ENCODE measurements at regions of chr14 and their contacts with region 1.

Region 1: GRCh38 chr14:76352639-76353281 is 23.2 kb upstream of the ESRRB start:
- DNase-seq: peak; percentile 26 to 37
- ATAC-seq: peak; percentile 86 to 91
- H3K4me3 ChIP-seq: peak overlapping the region; percentile 49 to 55 (median 52)
- H3K27ac ChIP-seq: peak overlapping the region; percentile 69 to 74 (median 70)
- H3K4me1 ChIP-seq: peaks cover 19 to 26% of the 10 kb centered on the region in 2 donors
- H3K27me3 ChIP-seq: no peaks in the 10 kb centered on the region
- CTCF ChIP-seq: peak; percentile 76 to 94 (median 88)
- POLR2A ChIP-seq: no peak

Region 2: DNA sequence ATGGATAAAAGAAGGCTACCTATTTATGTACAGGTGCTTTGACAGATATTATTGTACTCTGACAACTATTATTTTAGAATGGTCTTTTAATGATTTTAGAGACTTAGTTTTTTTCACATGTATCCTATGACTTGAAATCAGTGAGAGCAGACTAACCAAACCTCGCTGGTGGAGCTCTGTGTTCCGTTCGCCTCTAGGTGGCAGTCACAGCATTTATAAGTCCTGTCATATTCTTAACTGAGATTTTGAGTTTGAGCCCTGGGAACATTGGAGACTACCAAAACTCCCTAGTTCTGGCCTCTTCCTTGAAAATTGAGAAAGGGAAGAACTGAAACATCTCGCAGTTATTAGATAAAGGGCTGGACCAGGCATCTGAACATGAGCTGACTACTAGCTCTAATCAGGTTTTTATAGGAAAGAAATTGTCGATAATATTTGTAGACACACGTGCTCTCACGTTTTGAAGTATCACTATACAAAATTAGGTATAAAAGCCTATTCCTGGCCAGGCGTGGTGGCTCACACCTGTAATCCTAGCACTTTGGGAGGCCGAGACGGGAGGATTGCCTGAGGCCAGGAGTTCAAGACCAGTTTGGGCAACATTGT is 643.5 kb before region 1 on chr14:
- in situ Hi-C with region 1: no loop called
- intact Hi-C with region 1: loop called (anchors 5 kb)
- DNase-seq: peak; percentile 54 to 70
- ATAC-seq: peak; percentile 48 to 63
- H3K4me3 ChIP-seq: no peak overlapping the region
- H3K27ac ChIP-seq: no peak overlapping the region
- H3K4me1 ChIP-seq: peaks cover 16 to 23% of the 10 kb centered on the region in 2 donors
- H3K27me3 ChIP-seq: no peaks in the 10 kb centered on the region
- CTCF ChIP-seq: peak; percentile 71 to 84 (median 74)
- POLR2A ChIP-seq: no peak

Region 3: DNA sequence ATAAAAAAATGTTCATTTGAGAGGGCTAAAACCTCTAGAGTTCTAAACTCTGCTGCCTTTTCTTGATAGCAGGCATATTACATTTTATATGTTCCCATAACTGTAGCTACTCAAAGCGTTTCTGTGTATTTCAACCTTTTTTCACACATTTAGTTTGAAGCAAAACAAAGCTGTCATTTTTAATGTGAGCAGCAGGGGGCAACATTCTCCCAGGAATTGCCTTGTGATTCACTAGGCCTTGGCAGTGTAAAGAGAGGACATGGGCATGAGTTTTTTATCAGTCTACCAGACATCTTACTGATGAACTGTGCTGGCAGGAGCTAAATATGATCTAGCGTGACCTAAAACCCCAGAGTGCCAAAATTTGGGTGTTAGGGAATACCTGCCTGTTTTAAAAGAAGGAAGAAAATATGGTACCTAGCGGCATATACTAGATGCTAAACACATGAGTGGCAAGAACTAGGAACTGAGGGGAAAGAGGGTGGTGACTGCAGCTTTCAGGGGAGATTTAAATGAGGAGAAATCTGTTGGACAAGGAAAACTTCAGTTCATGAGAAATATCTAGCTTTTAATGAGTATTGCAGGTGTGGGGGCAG is 301.9 kb before region 1 on chr14:
- in situ Hi-C with region 1: loop called (anchors 5 to 10 kb)
- intact Hi-C with region 1: loop called (anchors 1 kb)
- DNase-seq: peak; percentile 11 to 29
- ATAC-seq: peak; percentile 75 to 84
- H3K4me3 ChIP-seq: no peak overlapping the region
- H3K27ac ChIP-seq: no peak overlapping the region
- H3K4me1 ChIP-seq: no peaks in the 10 kb centered on the region
- H3K27me3 ChIP-seq: no peaks in the 10 kb centered on the region
- CTCF ChIP-seq: peak; percentile 75 to 86 (median 80)
- POLR2A ChIP-seq: no peak

Region 4: DNA sequence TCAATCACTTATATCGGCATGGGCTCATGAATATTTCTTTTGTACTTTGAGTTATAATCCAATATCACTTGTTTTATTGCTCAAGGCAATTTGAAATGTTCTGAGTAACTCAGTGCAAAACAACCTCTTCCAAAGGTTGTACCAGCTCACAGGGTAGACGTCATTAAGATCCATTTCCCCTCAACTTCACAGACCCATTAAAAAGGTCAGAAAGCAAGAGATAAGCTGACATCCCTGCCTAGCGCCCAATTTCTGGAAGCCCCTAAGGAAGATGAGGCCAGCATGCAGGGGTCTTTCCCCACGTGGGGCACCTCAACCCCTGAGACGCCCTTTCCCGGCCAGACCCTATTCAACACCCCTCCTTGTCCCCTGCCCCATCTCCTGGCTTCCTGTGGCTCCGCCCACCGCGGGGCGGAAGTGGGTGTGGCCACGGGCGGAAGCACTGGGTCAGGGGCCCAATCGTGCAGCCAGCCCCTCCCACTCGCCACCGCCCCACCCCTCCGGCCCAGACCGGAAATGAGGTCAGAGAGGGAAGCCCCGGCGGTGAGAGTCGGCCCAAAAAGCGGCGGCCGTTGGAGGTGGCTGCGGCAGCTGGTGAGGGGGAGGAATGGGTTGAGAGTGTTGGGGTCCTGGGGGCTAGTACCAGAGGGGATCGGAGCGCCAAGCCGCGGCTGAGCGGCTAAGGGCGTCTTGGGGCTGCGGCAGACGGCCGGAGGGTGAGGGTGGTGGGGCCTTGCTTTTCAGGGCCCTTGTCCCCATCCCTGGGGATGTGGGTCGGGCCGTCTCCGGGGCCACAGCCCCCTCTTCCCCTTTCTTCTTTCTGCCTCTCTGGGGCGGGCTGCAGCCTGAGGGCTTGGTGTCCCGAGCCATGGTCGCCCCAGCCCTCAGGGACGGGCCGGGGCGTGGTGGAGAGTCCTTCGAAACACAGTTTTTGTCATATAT is 201.1 kb before region 1 on chr14 and contains the start of gene GPATCH2L:
- in situ Hi-C with region 1: no loop called
- intact Hi-C with region 1: loop called (anchors 5 kb)
- DNase-seq: peak; percentile 89 to 95
- ATAC-seq: peak; percentile 90 to 95
- H3K4me3 ChIP-seq: peak within 1 kb of the TSS; percentile 81 to 99 (median 92)
- H3K27ac ChIP-seq: peak within 1 kb of the TSS; percentile 83 to 95 (median 94)
- H3K4me1 ChIP-seq: peaks cover 42 to 44% of the 10 kb centered on the region in 2 donors
- H3K27me3 ChIP-seq: no peaks in the 10 kb centered on the region
- CTCF ChIP-seq: no peak
- POLR2A ChIP-seq: peak; percentile 93
- total RNA-seq, gene GPATCH2L: 24.6 to 63.5 (median 41.9) TPM

Region 5: GRCh38 chr14:76212242-76212641 is 140.5 kb before region 1 on chr14:
- in situ Hi-C with region 1: no loop called
- intact Hi-C with region 1: no loop called
- DNase-seq: no peak
- ATAC-seq: no peak
- H3K4me3 ChIP-seq: no peak overlapping the region
- H3K27ac ChIP-seq: no peak overlapping the region
- H3K4me1 ChIP-seq: no peaks in the 10 kb centered on the region
- H3K27me3 ChIP-seq: no peaks in the 10 kb centered on the region
- CTCF ChIP-seq: no peak
- POLR2A ChIP-seq: no peak

Region 6: GRCh38 chr14:76267322-76268051 is 85.3 kb before region 1 on chr14:
- in situ Hi-C with region 1: no loop called
- intact Hi-C with region 1: loop called (anchors 5 kb)
- DNase-seq: peak; percentile 36 to 68
- ATAC-seq: peak; percentile 82 to 95
- H3K4me3 ChIP-seq: peak overlapping the region; percentile 52 to 66 (median 58)
- H3K27ac ChIP-seq: peak overlapping the region; percentile 3 to 77 (median 62)
- H3K4me1 ChIP-seq: peaks cover 0 to 4% of the 10 kb centered on the region in 2 donors
- H3K27me3 ChIP-seq: peaks cover 0 to 4% (median 0%) of the 10 kb centered on the region in 3 donors
- CTCF ChIP-seq: peak in 1 of 5 experiments; percentile 39
- POLR2A ChIP-seq: no peak

Region 7: GRCh38 chr14:76314521-76315034 is 38.2 kb before region 1 on chr14:
- in situ Hi-C with region 1: no loop called
- intact Hi-C with region 1: loop called (anchors 1 kb)
- DNase-seq: no peak
- ATAC-seq: no peak
- H3K4me3 ChIP-seq: no peak overlapping the region
- H3K27ac ChIP-seq: peak overlapping the region in 2 of 4 donors; percentile 15 to 36
- H3K4me1 ChIP-seq: peaks cover 18 to 24% of the 10 kb centered on the region in 2 donors
- H3K27me3 ChIP-seq: no peaks in the 10 kb centered on the region
- CTCF ChIP-seq: no peak
- POLR2A ChIP-seq: no peak

Region 8: DNA sequence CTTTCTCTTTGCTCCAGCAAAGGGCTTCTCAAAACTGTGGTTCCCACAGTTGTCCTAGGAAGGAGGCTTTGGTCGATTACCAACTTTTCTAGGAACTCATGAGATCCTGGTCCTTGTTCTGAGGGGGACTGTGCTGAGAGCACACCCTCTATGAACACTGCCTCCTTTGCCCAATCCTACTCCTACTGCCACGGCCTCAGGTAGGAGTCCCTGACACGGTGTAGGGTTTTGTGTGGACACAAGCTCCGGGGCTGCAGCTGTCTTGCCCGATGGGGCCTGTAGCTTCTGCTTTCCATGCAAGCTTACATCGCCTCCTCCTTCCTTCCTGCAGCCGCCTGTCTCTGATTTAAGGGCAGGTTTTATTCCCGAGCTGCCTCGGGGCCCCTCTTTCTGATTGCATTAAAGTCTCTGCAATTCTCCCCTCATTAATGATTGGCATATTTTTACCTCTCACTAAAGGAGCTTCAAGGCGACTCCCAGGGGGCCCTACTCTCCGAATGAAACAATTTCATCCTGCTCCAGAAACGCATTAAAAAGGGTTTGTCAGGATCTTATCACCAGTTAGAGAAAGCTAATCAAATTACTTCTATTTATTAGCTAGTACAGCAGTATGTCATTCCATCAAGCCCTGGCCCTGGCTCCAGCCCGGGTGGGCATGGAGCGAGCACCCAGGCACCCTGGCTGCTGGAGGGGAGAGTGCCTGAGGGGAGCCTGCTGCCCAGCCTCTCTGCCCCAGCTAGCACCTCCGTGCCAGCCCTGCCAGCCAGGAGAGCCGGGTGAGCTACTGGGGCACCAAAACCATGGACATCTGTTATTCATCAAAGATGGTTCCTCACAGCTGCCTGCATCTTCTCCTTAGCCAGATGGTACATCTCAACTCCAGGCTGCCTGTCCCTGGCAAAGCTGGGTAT is 14.9 kb before region 1 on chr14:
- in situ Hi-C with region 1: no loop called
- intact Hi-C with region 1: no loop called
- DNase-seq: no peak
- ATAC-seq: no peak
- H3K4me3 ChIP-seq: no peak overlapping the region
- H3K27ac ChIP-seq: no peak overlapping the region
- H3K4me1 ChIP-seq: no peaks in the 10 kb centered on the region
- H3K27me3 ChIP-seq: no peaks in the 10 kb centered on the region
- CTCF ChIP-seq: no peak
- POLR2A ChIP-seq: no peak

Measured in gastrocnemius medialis (tissue), 4 donors.